HepG2 (cell line): ENCODE measurements at regions of chr19 and their contacts with region 1.

Region 1: GRCh38 chr19:12052497-12053169 is at the start of gene ZNF878:
- DNase-seq: peak; percentile 97
- ATAC-seq: peak; percentile 98
- H3K4me3 ChIP-seq: peak within 1 kb of the TSS; percentile 77 to 97 (median 90)
- H3K27ac ChIP-seq: peak within 1 kb of the TSS; percentile 93
- H3K4me1 ChIP-seq: peaks cover 45% of the 10 kb centered on the region
- H3K27me3 ChIP-seq: peaks cover 0 to 10% of the 10 kb centered on the region in 2 experiments; a peak in 2 of 5 replicates
- CTCF ChIP-seq: peak; percentile 51
- EP300 ChIP-seq: no peak
- POLR2A ChIP-seq: peak; percentile 100
- RAD21 ChIP-seq: peak; percentile 71
- total RNA-seq, gene ZNF878: 5.2 and 6.4 TPM in 2 replicates

Region 2: DNA sequence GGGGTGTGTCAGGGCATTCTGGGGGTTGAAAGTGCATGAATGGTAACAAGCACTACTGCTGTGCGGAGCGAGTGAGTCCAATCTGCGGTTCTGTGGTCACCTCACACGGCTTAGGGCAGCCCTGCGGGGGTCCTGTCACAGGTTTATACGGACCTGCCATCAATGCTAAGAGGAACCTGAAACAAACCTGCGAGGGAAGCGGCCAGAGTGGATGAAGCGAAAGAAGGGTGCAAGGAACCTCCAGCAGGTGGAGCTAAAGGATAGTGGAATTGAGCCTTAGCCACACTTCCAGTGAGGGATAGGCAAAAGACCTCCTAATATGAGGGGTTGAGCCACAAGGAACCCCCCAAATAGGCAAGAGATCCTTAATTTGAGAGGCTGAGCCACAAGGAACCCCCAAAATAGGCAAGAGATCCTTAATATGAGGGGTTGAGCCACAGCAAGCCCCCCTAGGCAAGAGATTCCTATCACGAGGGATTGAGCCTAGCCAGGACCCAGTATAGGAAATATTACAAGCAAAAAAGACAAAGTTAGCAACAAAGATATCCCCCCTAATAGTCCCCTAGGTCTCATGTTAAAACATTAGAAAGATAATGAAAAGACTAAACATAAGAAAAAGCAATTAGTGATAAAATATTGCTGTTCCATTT is 171.4 kb before region 1 on chr19:
- CTCF ChIA-PET with region 1: interaction called, 5 read pairs
- POLR2A ChIA-PET with region 1: interaction called, 4 read pairs
- in situ Hi-C with region 1: no loop called
- intact Hi-C with region 1: loop called (anchors 5 kb)
- DNase-seq: peak; percentile 49
- ATAC-seq: peak; percentile 81
- H3K4me3 ChIP-seq: no peak overlapping the region
- H3K27ac ChIP-seq: no peak overlapping the region
- H3K4me1 ChIP-seq: peaks cover 9% of the 10 kb centered on the region; the same call in 1 of the 2 replicates
- H3K27me3 ChIP-seq: no peaks in the 10 kb centered on the region
- CTCF ChIP-seq: peak; percentile 94
- EP300 ChIP-seq: no peak
- POLR2A ChIP-seq: no peak
- RAD21 ChIP-seq: peak; percentile 87

Region 3: GRCh38 chr19:11924886-11925650 is 127.6 kb before region 1 on chr19 and contains the start of gene ZNF700:
- CTCF ChIA-PET with region 1: no interaction called
- POLR2A ChIA-PET with region 1: interaction called, 14 read pairs
- in situ Hi-C with region 1: no loop called
- intact Hi-C with region 1: loop called (anchors 2 kb)
- DNase-seq: peak; percentile 93
- ATAC-seq: peak; percentile 90
- H3K4me3 ChIP-seq: peak within 1 kb of the TSS; percentile 80 to 88 (median 85)
- H3K27ac ChIP-seq: peak within 1 kb of the TSS; percentile 97
- H3K4me1 ChIP-seq: peaks cover 51% of the 10 kb centered on the region
- H3K27me3 ChIP-seq: no peaks in the 10 kb centered on the region; a peak in 1 of 5 replicates
- CTCF ChIP-seq: no peak
- EP300 ChIP-seq: no peak
- POLR2A ChIP-seq: peak; percentile 84 to 97
- RAD21 ChIP-seq: peak; percentile 35
- total RNA-seq, gene ZNF700: 12.8 and 16.5 TPM in 2 replicates

Region 4: DNA sequence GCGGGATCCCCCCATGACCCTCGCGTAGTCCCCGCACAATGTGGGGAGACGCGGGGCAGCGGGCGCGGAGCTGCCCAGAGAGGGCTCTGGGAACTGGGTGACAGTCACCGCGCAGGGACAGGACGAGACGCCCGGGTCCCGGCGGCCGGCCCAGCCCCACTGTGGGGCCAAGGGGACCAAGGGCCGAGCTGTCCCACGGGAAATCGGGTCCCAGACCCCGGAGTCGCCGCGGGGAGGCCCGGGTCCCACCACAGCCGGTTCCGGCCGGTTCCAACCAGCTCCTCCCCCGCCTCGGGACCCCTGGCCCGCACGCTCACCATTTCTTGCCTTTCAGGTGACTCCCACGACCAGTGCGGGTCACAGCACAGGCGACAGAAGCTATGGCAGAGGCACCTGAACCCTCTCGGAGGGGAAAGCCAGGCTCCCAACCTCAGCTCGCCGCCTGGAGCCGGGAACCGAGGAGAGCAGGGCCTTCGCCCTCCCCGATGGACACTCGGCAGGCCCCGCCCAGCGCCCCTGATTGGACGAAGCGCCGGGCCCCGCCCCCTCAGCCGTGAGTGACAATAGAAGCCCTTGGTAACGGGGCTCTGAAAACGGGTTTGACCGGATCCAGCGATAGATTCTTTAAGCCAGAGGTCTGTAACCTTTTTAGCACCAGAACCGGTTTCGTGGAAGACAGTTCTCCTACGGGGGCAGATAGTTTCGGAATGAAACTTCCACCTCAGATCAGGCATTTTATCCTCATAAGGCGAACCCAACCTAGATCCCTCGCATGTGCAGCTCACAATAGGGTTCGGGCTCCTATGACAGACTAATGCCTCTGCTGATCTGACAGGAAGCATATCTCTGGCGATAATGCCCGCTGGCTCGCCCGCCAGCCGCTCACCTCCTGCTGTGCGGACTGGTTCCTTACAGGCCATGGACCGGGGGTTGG is 17.1 kb before region 1 on chr19 and contains the start of gene ZNF433:
- CTCF ChIA-PET with region 1: no interaction called
- POLR2A ChIA-PET with region 1: interaction called, 47 read pairs
- in situ Hi-C with region 1: no loop called
- intact Hi-C with region 1: no loop called
- DNase-seq: peak; percentile 84
- ATAC-seq: peak; percentile 99
- H3K4me3 ChIP-seq: peak within 1 kb of the TSS; percentile 86 to 94 (median 89)
- H3K27ac ChIP-seq: peak within 1 kb of the TSS; percentile 81
- H3K4me1 ChIP-seq: peaks cover 10% of the 10 kb centered on the region
- H3K27me3 ChIP-seq: no peaks in the 10 kb centered on the region; a peak in 1 of 5 replicates
- CTCF ChIP-seq: peak; percentile 37; the same call in 1 of the 2 replicates
- EP300 ChIP-seq: no peak
- POLR2A ChIP-seq: peak; percentile 89 to 91
- RAD21 ChIP-seq: no peak
- total RNA-seq, gene ZNF433: 4.9 and 5.8 TPM in 2 replicates